OCI-LY7 (cell line): ENCODE measurements at regions of chr9 and their contacts with region 1.

Region 1: DNA sequence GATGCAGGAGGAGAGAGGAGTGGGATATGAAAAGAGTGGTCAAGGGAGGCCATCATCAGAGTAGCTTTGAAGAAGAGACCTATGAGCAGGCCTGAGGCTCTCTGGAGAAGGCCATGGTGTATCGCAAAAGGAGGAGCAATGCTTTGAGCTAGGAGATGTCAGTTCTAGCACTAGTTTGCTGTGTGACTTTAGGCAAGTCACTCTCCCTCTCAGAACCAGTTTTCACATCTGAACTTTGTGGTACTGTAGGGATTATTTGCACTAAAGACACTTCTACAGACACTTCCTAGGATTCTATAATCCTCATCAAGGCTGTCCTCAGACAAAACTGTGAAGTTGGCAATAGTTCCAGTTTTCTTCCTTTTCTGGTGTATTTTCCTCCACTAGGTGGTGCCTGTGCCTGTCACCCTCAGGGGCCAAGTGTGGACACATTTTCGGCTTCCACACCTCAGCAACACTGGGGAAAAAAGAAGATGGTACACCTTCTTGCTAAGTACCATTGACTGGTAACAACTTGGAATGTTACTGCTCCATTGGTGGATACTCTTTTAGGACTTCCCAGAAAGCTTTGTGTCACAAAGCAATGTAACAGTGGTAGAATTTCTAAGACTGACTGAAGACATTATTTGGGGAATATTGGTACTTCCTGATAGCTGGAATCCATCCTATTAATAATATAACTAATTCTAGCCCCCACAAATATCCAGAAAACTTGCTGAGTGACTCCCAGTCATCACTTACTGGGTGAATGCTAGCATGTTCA is 9.9 kb downstream of the PAPPA start:
- DNase-seq: peak; percentile 2
- H3K4me3 ChIP-seq: no peak overlapping the region
- H3K27ac ChIP-seq: no peak overlapping the region
- H3K4me1 ChIP-seq: no peaks in the 10 kb centered on the region
- CTCF ChIP-seq: peak; percentile 69

Region 2: GRCh38 chr9:115591584-115591984 is 571.9 kb before region 1 on chr9:
- CTCF ChIA-PET with region 1: no interaction called
- POLR2A ChIA-PET with region 1: no interaction called
- intact Hi-C with region 1: loop called (anchors 5 kb)
- DNase-seq: peak; percentile 45
- H3K4me3 ChIP-seq: no peak overlapping the region
- H3K27ac ChIP-seq: no peak overlapping the region
- H3K4me1 ChIP-seq: no peaks in the 10 kb centered on the region
- CTCF ChIP-seq: peak; percentile 80

Region 3: GRCh38 chr9:117377046-117377634 is 1213.7 kb after region 1 on chr9:
- CTCF ChIA-PET with region 1: no interaction called
- POLR2A ChIA-PET with region 1: no interaction called
- intact Hi-C with region 1: no loop called
- DNase-seq: no peak
- H3K4me3 ChIP-seq: no peak overlapping the region
- H3K27ac ChIP-seq: no peak overlapping the region
- H3K4me1 ChIP-seq: no peaks in the 10 kb centered on the region
- CTCF ChIP-seq: no peak